Pancreas (tissue), 10 donors: ENCODE measurements at regions of chr6 and their contacts with region 1.

Region 1: DNA sequence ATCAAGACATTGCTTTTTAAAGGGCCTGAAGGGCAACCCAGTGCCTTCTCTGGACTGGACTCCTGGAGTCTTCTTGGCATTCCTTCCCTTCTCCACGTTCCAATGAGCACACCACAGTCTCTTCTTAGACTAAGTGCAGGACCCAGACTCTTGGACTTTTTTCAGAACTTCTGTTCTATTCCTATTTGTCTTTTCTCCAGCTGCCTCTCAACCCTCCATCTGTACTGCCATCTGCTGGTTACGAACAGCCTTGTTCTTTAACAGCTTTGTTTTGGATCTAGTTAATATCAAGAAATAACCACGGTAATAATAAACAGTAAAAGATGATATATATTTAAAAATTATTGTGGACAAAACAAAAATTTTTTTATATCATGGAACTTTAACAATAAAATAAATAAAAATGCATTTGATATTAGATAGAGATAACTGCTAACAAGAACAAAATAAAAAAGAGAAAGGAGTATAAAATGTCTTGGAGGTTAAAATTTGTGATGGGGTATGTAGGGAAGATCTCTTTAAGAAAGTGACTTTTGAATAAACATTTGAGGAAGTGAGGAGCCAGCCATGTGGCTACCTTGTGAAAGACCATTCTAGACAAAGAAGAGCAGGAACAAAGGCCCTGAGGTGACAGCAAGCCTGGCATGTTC is 105.1 kb upstream of the HCRTR2 start:
- DNase-seq: peak in 3 of 6 donors; percentile 8 to 36 (median 18)
- ATAC-seq: peak; percentile 38 to 76 (median 72)
- H3K4me3 ChIP-seq: no peak overlapping the region
- H3K27ac ChIP-seq: no peak overlapping the region
- H3K4me1 ChIP-seq: peaks cover 0 to 7% (median 0%) of the 10 kb centered on the region in 3 donors
- H3K27me3 ChIP-seq: no peaks in the 10 kb centered on the region
- CTCF ChIP-seq: peak; percentile 20 to 62 (median 41)

Region 2: DNA sequence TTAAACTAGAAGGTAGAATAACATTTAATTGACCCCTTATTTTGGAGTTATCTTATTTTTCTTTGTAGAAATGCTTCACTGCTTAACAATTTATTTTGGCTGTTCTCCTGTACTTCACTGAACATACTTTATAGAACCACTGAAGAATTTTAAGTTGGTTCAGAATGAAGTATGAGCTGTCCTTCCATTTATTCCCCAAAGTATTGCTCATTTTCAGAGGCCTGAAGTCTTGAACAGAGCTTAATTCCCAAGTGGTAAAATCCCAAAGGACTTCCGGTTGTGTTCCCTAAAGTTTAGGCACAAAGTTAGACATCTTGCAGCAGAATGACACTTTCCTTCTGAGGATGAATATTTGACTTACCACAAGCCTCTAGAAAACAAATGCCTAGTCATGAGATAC is 527.7 kb before region 1 on chr6:
- intact Hi-C with region 1: no loop called
- DNase-seq: no peak
- ATAC-seq: no peak
- H3K4me3 ChIP-seq: no peak overlapping the region
- H3K27ac ChIP-seq: no peak overlapping the region
- H3K4me1 ChIP-seq: no peaks in the 10 kb centered on the region
- H3K27me3 ChIP-seq: no peaks in the 10 kb centered on the region
- CTCF ChIP-seq: no peak

Region 3: DNA sequence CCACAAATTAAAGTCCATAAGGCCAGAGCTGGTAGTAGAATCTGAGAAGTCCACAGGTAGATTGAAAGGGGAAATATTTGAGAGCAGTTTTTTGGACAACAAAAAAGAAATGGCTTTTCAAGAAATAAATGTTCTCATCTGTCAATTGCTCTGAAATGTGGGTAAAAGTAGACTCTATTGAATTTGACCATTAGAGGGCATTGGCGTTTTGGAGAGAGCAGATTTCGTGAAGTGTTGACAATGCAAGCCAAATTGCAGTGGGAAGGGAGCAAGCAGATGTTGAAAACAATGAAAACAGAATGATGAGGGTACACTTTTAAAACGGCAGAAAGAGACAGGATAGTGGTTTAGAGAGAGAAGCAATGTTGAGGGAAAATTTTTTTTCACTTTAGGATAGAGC is 371.8 kb before region 1 on chr6:
- intact Hi-C with region 1: loop called in 1 of 3 experiments (anchors 10 kb)
- DNase-seq: no peak
- ATAC-seq: peak in 3 of 4 donors; percentile 74 to 80 (median 74)
- H3K4me3 ChIP-seq: no peak overlapping the region
- H3K27ac ChIP-seq: no peak overlapping the region
- H3K4me1 ChIP-seq: no peaks in the 10 kb centered on the region
- H3K27me3 ChIP-seq: no peaks in the 10 kb centered on the region
- CTCF ChIP-seq: peak in 3 of 4 donors; percentile 8 to 26 (median 20)

Region 4: GRCh38 chr6:54717849-54718455 is 351.3 kb before region 1 on chr6:
- intact Hi-C with region 1: loop called in 1 of 3 experiments (anchors 10 kb)
- DNase-seq: peak in 5 of 6 donors; percentile 36 to 72 (median 51)
- ATAC-seq: peak; percentile 79 to 90 (median 86)
- H3K4me3 ChIP-seq: peak overlapping the region in 1 of 4 donors; percentile 6
- H3K27ac ChIP-seq: peak overlapping the region in 2 of 4 donors; percentile 50 to 56
- H3K4me1 ChIP-seq: peaks cover 8 to 20% (median 16%) of the 10 kb centered on the region in 3 donors
- H3K27me3 ChIP-seq: no peaks in the 10 kb centered on the region
- CTCF ChIP-seq: peak; percentile 70 to 84 (median 78)